ENCODE measurements at regions of chr12 and their contacts with region 1.

Region 1: DNA sequence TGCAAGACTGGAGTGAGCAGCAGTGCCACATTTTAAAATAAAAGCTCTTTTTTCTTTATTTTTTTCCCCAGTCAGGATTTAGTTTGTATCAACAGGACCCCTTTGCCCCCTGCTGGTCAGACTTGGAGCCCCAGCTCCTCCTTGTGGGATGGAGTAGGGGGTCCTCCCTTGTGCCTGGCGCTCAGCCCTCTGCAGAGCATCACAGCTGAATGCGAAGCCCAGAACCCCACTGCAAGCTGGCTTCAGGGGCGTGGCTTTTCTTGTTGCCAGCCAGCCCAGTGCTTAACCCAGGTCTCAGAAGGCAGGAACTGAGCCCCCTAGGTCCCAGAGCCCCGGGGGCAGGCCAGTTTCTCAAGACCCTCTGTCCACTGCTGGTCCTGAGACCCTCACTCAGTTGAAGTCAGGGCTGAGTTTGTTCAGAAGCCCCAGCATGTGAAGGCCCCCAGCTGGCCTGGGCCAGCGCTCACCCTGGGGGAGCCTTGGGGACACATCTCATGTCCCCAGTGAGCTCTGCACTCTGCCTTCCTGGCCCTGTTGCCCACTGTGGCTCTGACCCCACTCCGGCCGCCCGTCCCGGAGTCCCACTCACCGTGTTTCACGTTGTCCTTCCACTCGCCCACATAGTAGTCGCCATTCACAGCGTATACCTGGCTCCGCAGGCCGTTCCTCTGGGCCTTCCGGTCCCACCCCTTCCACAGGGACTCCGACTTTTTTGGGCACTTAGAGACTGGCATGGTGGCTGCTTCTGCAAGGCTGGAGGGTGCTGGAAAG is 519 bp downstream of the MORN3 start:
- DNase-seq: no peak
- CTCF ChIP-seq: peak; percentile 48

Region 2: DNA sequence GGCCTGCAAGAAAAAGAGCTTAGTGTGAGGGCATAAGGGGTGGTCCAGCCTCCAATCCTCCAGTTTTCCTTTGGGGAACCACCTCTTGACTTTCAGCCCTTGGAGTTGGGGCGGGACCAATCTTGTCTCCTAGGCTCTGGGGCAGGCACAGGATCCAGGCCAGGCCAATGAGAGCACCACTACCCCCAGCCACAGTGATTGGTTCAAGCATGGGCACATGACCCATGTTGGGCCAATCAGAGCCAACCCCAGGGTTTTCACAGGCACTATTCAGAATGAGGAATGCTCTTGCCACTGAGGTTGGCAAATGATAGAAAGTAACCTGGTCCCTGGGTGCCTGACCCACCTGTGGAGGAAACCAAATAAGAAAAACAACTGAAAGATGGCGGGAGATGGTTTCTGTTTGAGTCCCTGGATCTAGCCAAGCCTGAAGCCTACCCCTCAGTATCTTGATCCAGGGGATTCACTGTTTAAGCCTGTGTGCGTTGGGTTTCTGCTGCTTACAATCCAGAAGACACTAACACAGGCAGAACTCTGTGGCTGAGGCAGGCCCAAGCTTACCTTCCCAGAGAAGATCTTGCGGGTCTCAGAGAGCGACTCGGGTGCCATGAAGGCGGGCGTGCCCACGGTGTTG is 416.1 kb before region 1 on chr12:
- CTCF ChIA-PET with region 1: no interaction called
- POLR2A ChIA-PET with region 1: no interaction called
- DNase-seq: no peak
- CTCF ChIP-seq: no peak

Region 3: GRCh38 chr12:121543786-121544185 is 125.1 kb before region 1 on chr12:
- CTCF ChIA-PET with region 1: interaction called, 10 read pairs
- POLR2A ChIA-PET with region 1: no interaction called
- DNase-seq: no peak
- CTCF ChIP-seq: no peak

Region 4: GRCh38 chr12:121626087-121626852 is 42.7 kb before region 1 on chr12 and contains the start of gene ORAI1:
- CTCF ChIA-PET with region 1: interaction called, 26 read pairs
- POLR2A ChIA-PET with region 1: interaction called, 3 read pairs
- DNase-seq: peak; percentile 94
- CTCF ChIP-seq: peak; percentile 25

Region 5: DNA sequence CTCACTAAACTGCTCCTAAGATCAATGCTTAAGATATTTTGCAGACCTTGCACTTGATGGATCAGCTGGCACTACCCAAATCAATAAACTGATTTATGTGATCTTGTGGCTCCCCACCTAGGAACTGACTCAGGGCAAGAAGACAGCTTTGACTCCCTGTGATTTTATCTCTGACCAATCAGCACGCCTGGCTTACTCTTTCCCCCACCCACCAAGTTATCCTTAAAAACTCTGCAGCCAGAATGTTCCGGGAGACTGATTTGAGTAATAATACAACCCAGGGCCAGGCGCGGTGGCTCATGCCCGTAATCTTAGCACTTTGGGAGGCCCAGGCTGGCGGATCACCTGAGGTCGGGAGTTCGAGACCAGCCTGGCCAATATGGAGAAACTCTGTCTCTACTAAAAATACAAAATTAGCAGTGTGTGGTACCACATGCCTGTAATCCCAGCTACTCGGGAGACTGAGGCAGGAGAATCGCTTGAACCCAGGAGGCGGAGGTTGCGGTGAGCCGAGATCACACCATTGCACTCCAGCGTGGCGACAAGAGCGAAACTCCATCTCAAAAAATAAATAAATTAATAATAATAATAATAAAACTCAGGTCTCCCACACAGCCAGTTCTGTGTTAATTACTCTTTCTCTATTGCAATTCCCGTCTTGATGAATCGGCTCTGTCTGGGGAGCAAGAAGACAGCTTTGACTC is 11.5 kb before region 1 on chr12:
- CTCF ChIA-PET with region 1: interaction called, 18 read pairs
- POLR2A ChIA-PET with region 1: interaction called, 5 read pairs
- DNase-seq: no peak
- CTCF ChIP-seq: no peak

Region 6: GRCh38 chr12:121678716-121679580 is 10.0 kb after region 1 on chr12:
- CTCF ChIA-PET with region 1: interaction called, 11 read pairs
- POLR2A ChIA-PET with region 1: no interaction called
- DNase-seq: no peak
- CTCF ChIP-seq: no peak